Activated T-helper 1 cell treated with anti-CD3 and anti-CD28 coated beads, Interleukin-12 subunit alpha, Interleukin-12 subunit beta, Interleukin-2, Interleukin-4 antibody, amounts not matched to agents 30 ng/mL and 10 ng/mL and 1 ng/mL, durations not matched to agents 14 hours and 24 hours and 36 hours (primary cell): ENCODE measurements at regions of chr7 and their contacts with region 1.

Region 1: DNA sequence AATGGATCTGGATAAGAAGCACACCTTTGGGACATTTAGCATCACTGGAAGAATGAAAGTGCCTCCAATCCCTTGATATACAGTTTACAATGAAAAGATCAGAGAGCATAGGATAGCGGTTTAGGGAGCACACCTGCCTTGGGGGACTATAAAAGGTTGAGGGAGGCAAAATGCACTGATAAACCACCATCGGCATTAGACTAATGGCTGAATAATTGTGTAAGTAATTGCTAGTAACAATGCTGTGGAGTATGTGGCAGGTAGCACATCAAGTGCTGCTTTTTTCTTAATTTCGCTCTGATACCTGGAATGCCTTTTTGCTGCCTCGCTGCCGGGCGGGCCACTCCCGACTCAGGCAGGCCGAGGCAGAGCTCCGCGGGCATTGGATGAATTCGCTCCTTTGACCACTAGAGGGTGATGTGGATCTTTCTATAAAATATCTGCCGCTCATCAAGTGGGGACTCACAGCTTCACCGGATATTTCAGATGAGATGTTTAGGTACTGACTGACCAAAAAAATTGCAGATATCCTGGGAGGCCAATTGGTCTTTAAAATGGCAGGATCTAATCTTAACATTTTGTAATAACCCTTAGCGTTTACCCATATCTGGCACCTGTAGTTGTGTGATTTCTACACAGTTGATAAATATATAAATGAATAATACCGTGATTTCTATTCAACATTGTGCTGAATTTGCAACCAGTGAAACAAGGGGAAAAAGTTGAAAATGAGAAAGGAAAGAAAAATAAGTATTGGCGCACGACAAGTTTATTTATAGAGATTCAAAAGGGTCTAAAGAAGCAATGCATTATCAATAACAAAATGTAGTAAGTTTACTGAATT is 116.8 kb upstream of the PRSS1 start:
- DNase-seq: peak; percentile 49
- H3K4me3 Mint-ChIP-seq: no peak overlapping the region
- H3K27ac Mint-ChIP-seq: no peak overlapping the region
- H3K4me1 Mint-ChIP-seq: peaks cover 18% of the 10 kb centered on the region
- H3K27me3 Mint-ChIP-seq: peaks cover 11% of the 10 kb centered on the region

Region 2: GRCh38 chr7:142669074-142669654 is 36.7 kb after region 1 on chr7:
- intact Hi-C with region 1: loop called (anchors 2 kb)
- DNase-seq: no peak
- H3K4me3 Mint-ChIP-seq: no peak overlapping the region
- H3K27ac Mint-ChIP-seq: no peak overlapping the region
- H3K4me1 Mint-ChIP-seq: peaks cover 22% of the 10 kb centered on the region
- H3K27me3 Mint-ChIP-seq: no peaks in the 10 kb centered on the region

Region 3: DNA sequence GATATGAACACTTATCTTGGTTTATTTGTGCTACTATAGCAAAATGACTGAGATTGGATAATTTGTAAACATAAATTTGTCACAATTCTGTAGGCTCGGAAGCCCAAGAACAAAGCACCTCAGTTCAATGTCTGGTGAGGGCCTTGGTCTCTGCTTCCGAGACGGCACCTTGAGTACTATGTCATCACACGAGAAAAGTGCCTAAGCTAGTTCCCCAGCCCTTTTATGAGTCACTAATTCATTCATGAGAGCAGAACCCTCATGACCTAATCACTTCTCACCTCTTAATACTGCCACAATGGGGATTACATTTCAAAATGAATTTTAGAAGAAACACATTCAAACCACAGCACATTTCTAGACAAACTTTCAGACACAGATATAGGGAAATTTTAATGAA is 64.8 kb after region 1 on chr7:
- intact Hi-C with region 1: no loop called
- DNase-seq: no peak
- H3K4me3 Mint-ChIP-seq: no peak overlapping the region
- H3K27ac Mint-ChIP-seq: no peak overlapping the region
- H3K4me1 Mint-ChIP-seq: peaks cover 21% of the 10 kb centered on the region
- H3K27me3 Mint-ChIP-seq: no peaks in the 10 kb centered on the region

Region 4: DNA sequence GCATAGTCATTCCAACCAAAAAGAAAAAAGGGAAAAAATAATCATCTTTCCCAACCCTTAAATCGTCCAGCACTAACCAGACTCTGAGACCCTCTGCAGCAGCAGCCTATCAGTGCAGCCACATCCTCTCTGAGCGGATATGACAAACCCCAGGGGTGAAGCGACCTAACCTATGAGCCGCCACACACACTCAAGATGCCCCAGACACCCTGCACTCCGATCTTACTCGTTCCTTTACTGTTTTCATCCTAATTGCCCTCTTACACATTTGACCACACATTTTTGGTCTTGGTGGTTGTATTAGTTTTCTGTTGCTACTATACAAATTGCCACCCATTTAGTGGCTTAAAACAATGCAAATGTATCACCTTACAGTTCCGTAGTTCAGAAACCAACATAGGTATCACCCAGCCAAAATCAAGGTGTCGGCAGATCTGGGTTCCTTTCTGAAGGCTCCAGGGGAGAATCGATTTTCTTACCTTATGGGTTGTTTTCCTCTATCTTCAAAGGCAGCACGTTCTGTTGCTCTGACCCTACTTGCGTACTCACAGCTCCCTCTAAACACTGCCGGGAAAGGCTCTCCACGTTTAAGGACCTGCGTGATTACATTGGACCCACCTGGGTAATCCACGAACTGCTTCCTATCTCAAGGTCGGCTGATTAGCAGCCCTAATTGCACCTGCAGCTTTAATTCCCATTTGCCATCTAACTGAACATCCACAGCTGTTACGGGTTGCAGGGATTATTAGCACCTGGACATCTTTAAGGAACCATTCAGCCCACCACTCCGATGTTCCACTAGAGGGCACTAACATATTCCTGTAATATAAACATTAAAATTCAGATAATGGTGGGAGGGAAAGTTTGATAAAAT is 79.5 kb after region 1 on chr7:
- intact Hi-C with region 1: loop called (anchors 2 kb)
- DNase-seq: peak; percentile 2
- H3K4me3 Mint-ChIP-seq: peak overlapping the region; percentile 78
- H3K27ac Mint-ChIP-seq: peak overlapping the region; percentile 85
- H3K4me1 Mint-ChIP-seq: peaks cover 66% of the 10 kb centered on the region
- H3K27me3 Mint-ChIP-seq: no peaks in the 10 kb centered on the region